ENCODE measurements at regions of chr15 and their contacts with region 1.

Region 1: GRCh38 chr15:49169880-49170597 is at the start of gene GALK2:
- DNase-seq: peak; percentile 85
- ATAC-seq: peak; percentile 99
- H3K4me3 ChIP-seq: peak within 1 kb of the TSS; percentile 87
- H3K27ac ChIP-seq: peak within 1 kb of the TSS; percentile 67
- H3K4me1 ChIP-seq: peaks cover 12% of the 10 kb centered on the region; the same call in 1 of the 2 replicates
- H3K27me3 ChIP-seq: no peaks in the 10 kb centered on the region
- CTCF ChIP-seq: no peak
- total RNA-seq, gene GALK2: 27.2 and 34.6 TPM in 2 replicates

Region 2: GRCh38 chr15:49155110-49155833 is 14.8 kb before region 1 on chr15 and contains the start of gene COPS2:
- CTCF ChIA-PET with region 1: interaction called, 3 read pairs
- POLR2A ChIA-PET with region 1: interaction called, 3 read pairs
- intact Hi-C with region 1: loop called (anchors 1 kb)
- DNase-seq: peak; percentile 98
- ATAC-seq: peak; percentile 94
- H3K4me3 ChIP-seq: peak within 1 kb of the TSS; percentile 100
- H3K27ac ChIP-seq: peak within 1 kb of the TSS; percentile 52
- H3K4me1 ChIP-seq: peaks cover 19% of the 10 kb centered on the region
- H3K27me3 ChIP-seq: no peaks in the 10 kb centered on the region
- CTCF ChIP-seq: no peak
- total RNA-seq, gene COPS2: 30.4 TPM in 2 replicates

Region 3: GRCh38 chr15:49187549-49188245 is 17.7 kb after region 1 on chr15:
- CTCF ChIA-PET with region 1: no interaction called
- POLR2A ChIA-PET with region 1: no interaction called
- intact Hi-C with region 1: loop called (anchors 1 kb)
- DNase-seq: peak; percentile 26
- ATAC-seq: peak; percentile 63
- H3K4me3 ChIP-seq: no peak overlapping the region
- H3K27ac ChIP-seq: no peak overlapping the region
- H3K4me1 ChIP-seq: peaks cover 4% of the 10 kb centered on the region; the same call in 1 of the 2 replicates
- H3K27me3 ChIP-seq: no peaks in the 10 kb centered on the region
- CTCF ChIP-seq: no peak

Region 4: GRCh38 chr15:49255966-49256759 is 86.1 kb after region 1 on chr15:
- CTCF ChIA-PET with region 1: no interaction called
- POLR2A ChIA-PET with region 1: no interaction called
- intact Hi-C with region 1: no loop called
- DNase-seq: no peak
- ATAC-seq: no peak
- H3K4me3 ChIP-seq: no peak overlapping the region
- H3K27ac ChIP-seq: no peak overlapping the region
- H3K4me1 ChIP-seq: no peaks in the 10 kb centered on the region
- H3K27me3 ChIP-seq: no peaks in the 10 kb centered on the region
- CTCF ChIP-seq: no peak

Region 5: GRCh38 chr15:49751191-49751590 is 581.2 kb after region 1 on chr15:
- CTCF ChIA-PET with region 1: no interaction called
- POLR2A ChIA-PET with region 1: no interaction called
- intact Hi-C with region 1: no loop called
- DNase-seq: no peak
- ATAC-seq: no peak
- H3K4me3 ChIP-seq: no peak overlapping the region
- H3K27ac ChIP-seq: no peak overlapping the region
- H3K4me1 ChIP-seq: no peaks in the 10 kb centered on the region
- H3K27me3 ChIP-seq: no peaks in the 10 kb centered on the region
- CTCF ChIP-seq: no peak